Transverse colon (tissue), 4 donors: ENCODE measurements at regions of chr6 and their contacts with region 1.

Region 1: GRCh38 chr6:7373739-7374138 is 15.8 kb downstream of the CAGE1 start:
- DNase-seq: no peak
- H3K4me3 ChIP-seq: no peak overlapping the region
- H3K27ac ChIP-seq: no peak overlapping the region
- H3K4me1 ChIP-seq: peaks cover 0 to 5% (median 0%) of the 10 kb centered on the region in 4 donors
- H3K27me3 ChIP-seq: no peaks in the 10 kb centered on the region
- CTCF ChIP-seq: no peak
- EP300 ChIP-seq: no peak
- POLR2A ChIP-seq: no peak

Region 2: DNA sequence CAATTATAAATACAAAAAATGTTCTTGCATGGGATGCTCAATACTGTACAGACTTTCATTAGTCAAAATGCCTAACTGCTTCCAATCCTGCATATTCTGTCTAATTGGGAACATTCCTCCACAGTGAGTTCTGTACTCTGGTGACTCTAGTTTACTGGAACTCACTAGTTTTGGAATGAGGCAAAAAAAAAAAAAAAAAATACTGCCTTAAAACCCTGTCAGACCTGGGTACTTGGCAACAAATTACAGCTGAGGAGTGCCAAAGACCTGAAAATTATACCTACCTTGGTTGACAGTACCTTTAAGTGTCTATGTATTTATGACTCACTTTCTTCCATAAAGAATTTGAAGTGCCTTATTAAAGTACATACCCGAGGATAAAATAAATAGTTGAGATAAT is 1835.8 kb before region 1 on chr6:
- in situ Hi-C with region 1: no loop called
- intact Hi-C with region 1: loop called (anchors 5 kb)
- DNase-seq: no peak
- H3K4me3 ChIP-seq: no peak overlapping the region
- H3K27ac ChIP-seq: no peak overlapping the region
- H3K4me1 ChIP-seq: peaks cover 0 to 3% (median 0%) of the 10 kb centered on the region in 4 donors
- H3K27me3 ChIP-seq: no peaks in the 10 kb centered on the region
- CTCF ChIP-seq: no peak
- EP300 ChIP-seq: no peak
- POLR2A ChIP-seq: no peak